ENCODE measurements at regions of chr2 and their contacts with region 1.

Region 1: DNA sequence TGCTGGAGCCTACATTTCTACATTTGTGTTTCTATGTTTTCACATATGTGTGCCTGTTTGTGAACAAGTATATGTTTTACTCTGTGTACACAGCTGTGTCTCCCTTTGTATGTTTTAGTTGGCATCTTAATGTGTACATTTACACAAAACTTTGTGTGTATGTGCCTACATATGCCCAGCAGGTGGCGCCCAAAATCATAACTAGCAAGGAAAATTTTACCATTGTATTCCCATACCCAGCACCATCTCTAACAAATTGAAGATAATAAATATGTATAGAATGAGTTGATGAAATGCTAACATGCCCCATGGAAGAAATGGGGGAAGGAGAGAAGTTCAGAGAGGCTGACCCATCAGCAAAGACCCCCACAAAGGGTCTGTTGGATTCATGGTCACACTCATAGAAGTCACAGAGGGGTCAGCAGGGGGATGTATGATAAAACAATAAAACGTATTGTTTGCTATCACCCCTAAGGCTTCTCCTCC is 48.1 kb downstream of the PKDCC start:
- DNase-seq: peak; percentile 88
- ATAC-seq: peak; percentile 68
- H3K4me3 Mint-ChIP-seq: no peak overlapping the region
- H3K27ac Mint-ChIP-seq: no peak overlapping the region
- H3K4me1 Mint-ChIP-seq: peaks cover 21% of the 10 kb centered on the region
- H3K27me3 Mint-ChIP-seq: no peaks in the 10 kb centered on the region
- CTCF ChIP-seq: peak; percentile 89

Region 2: DNA sequence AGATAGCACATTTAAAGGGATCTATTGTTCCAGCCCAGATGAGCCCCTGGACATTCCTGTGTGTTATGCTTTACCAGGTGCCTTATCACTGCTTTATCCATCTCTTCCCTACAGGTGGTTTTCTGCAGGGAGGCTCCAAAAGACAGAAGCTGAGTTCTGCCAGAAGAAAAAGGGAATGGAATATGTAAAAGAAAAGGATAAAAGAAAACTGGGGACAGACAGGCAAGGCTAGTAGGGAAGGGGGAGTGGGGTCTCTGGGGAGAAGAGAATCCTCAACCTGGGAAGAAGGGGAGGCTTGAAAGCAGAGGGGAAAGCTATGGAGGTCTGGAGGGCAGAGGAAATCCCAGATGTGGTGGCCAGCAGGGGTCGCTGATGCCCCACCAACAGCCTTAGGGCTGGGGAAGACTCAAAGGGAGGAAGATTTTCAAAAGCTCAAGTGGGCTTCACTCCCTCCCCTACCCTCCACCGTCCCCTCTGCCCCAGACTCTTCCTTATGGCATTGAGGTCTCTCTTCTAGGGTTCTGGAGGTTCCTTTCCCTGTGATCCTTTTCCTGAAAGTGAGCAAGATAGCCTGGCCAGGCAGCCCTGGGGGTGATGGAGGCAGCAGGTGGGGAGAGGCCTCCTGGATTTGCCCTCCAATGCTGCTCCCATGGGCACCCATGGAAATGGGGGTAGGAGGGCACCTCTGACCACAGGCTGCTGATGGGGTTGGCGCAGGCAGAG is 226.3 kb before region 1 on chr2:
- CTCF ChIA-PET with region 1: interaction called, 361 read pairs
- POLR2A ChIA-PET with region 1: no interaction called
- intact Hi-C with region 1: no loop called
- DNase-seq: peak; percentile 80
- ATAC-seq: peak; percentile 92
- H3K4me3 Mint-ChIP-seq: no peak overlapping the region
- H3K27ac Mint-ChIP-seq: no peak overlapping the region
- H3K4me1 Mint-ChIP-seq: peaks cover 9% of the 10 kb centered on the region
- H3K27me3 Mint-ChIP-seq: no peaks in the 10 kb centered on the region
- CTCF ChIP-seq: peak; percentile 78

Region 3: GRCh38 chr2:42169100-42169873 is 73.3 kb after region 1 on chr2 and contains the start of gene EML4:
- CTCF ChIA-PET with region 1: interaction called, 39 read pairs
- POLR2A ChIA-PET with region 1: interaction called, 4 read pairs
- intact Hi-C with region 1: loop called (anchors 2 kb)
- DNase-seq: peak; percentile 92
- ATAC-seq: peak; percentile 90
- H3K4me3 Mint-ChIP-seq: no peak within 1 kb of the TSS
- H3K27ac Mint-ChIP-seq: no peak within 1 kb of the TSS
- H3K4me1 Mint-ChIP-seq: peaks cover 22% of the 10 kb centered on the region
- H3K27me3 Mint-ChIP-seq: no peaks in the 10 kb centered on the region
- CTCF ChIP-seq: no peak
- total RNA-seq, gene EML4: 58.2 to 59.7 TPM

Region 4: GRCh38 chr2:42191285-42192009 is 95.5 kb after region 1 on chr2:
- CTCF ChIA-PET with region 1: interaction called, 55 read pairs
- POLR2A ChIA-PET with region 1: interaction called, 3 read pairs
- intact Hi-C with region 1: loop called (anchors 2 kb)
- DNase-seq: no peak
- ATAC-seq: no peak
- H3K4me3 Mint-ChIP-seq: no peak overlapping the region
- H3K27ac Mint-ChIP-seq: peak overlapping the region; percentile 46
- H3K4me1 Mint-ChIP-seq: peaks cover 59% of the 10 kb centered on the region
- H3K27me3 Mint-ChIP-seq: no peaks in the 10 kb centered on the region
- CTCF ChIP-seq: no peak

Region 5: DNA sequence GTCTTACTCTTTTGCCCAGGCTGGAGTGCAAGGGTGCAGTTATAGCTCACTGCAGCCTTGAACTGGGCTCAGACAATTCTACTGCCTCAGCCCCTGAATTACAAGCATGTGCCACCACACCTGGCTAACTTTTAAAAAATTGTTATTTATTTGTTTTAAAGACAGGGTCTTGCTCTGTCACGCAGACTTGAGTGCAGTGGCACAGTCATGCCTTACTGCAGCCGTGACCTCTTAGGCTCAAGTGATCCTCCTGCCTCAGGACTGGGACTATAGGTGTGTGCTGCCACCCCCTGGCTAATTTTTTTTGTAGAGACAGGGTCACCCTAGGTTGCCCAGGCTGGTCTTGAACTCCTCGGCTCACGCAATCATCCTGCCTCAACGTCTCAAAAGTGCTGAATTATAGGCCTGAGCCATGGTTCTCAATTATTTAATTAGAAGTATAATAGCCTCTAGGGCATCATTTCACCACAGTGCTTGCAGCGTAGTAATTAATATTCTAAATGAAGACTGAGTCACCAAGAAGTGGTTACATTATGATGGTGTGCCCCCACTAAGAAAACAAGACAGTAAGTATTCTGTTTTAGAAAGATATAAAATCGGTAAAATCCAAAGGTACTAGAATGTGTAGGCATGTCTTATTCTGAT is 142.8 kb after region 1 on chr2:
- CTCF ChIA-PET with region 1: interaction called, 73 read pairs
- POLR2A ChIA-PET with region 1: no interaction called
- intact Hi-C with region 1: loop called (anchors 2 kb)
- DNase-seq: peak; percentile 62
- ATAC-seq: peak; percentile 94
- H3K4me3 Mint-ChIP-seq: no peak overlapping the region
- H3K27ac Mint-ChIP-seq: no peak overlapping the region
- H3K4me1 Mint-ChIP-seq: peaks cover 71% of the 10 kb centered on the region
- H3K27me3 Mint-ChIP-seq: no peaks in the 10 kb centered on the region
- CTCF ChIP-seq: peak; percentile 54

Region 6: DNA sequence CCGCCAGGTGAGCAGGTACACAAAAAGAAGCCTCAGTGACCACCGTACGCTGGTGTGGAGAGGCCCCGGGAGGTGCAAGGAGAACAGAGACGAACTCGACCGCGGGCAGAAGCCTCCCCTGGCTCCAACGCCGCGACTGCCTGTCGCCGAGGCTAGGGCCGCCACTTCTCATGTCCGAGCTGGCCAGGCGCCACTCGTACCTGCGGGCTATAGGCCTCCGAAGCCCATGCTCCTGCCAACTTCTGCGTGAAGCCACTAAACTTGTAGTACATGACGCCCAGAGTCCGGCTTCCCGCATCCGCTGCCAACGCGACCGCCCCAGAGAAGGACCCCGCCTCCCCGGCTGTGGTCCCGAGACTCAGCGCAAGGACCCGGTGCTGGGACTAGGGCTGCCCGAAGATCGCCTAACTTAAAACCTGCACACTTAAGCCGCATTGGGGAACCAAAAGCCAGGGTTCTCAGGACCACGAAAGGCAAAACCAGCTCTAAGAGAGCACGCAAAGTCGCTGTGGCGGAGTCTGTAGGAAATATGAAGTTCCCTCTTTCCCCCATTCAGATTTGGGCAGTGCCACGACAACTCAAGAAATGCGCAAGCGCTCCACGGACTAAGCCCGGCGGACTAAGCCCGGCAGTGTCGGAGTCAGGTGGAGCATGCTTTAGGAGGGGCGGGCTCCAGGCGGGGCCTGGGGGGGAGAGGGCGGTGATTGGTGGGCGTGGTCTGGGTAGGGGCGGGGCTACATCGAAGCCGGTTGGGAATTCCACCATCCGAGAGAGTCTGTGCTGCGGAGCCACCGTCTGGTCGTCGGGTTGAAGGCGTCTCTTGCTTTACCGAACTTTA is 265.1 kb after region 1 on chr2 and contains the start of gene COX7A2L:
- CTCF ChIA-PET with region 1: interaction called, 5 read pairs
- POLR2A ChIA-PET with region 1: no interaction called
- intact Hi-C with region 1: loop called (anchors 5 kb)
- DNase-seq: peak; percentile 96
- ATAC-seq: peak; percentile 95
- H3K4me3 Mint-ChIP-seq: peak within 1 kb of the TSS; percentile 89
- H3K27ac Mint-ChIP-seq: peak within 1 kb of the TSS; percentile 99
- H3K4me1 Mint-ChIP-seq: peaks cover 46% of the 10 kb centered on the region
- H3K27me3 Mint-ChIP-seq: no peaks in the 10 kb centered on the region
- CTCF ChIP-seq: no peak
- total RNA-seq, gene COX7A2L: 113 to 115 TPM

Measured in activated CD8-positive, alpha-beta T cell treated with anti-CD3 and anti-CD28 coated beads for 36 hours (primary cell).